HEK293 (cell line): ENCODE measurements at regions of chr17 and their contacts with region 1.

Region 1: GRCh38 chr17:62686439-62686838 is 59.0 kb downstream of the MRC2 start:
- H3K4me3 ChIP-seq: no peak overlapping the region
- H3K27ac ChIP-seq: no peak overlapping the region
- H3K4me1 ChIP-seq: no peaks in the 10 kb centered on the region
- CTCF ChIP-seq: no peak

Region 2: GRCh38 chr17:62644487-62645173 is 41.8 kb before region 1 on chr17:
- CTCF ChIA-PET with region 1: no interaction called
- POLR2A ChIA-PET with region 1: no interaction called
- H3K4me3 ChIP-seq: no peak overlapping the region
- H3K27ac ChIP-seq: no peak overlapping the region
- H3K4me1 ChIP-seq: no peaks in the 10 kb centered on the region
- CTCF ChIP-seq: no peak

Region 3: GRCh38 chr17:62671583-62672312 is 14.7 kb before region 1 on chr17:
- CTCF ChIA-PET with region 1: interaction called, 12 read pairs
- POLR2A ChIA-PET with region 1: no interaction called
- H3K4me3 ChIP-seq: no peak overlapping the region
- H3K27ac ChIP-seq: no peak overlapping the region
- H3K4me1 ChIP-seq: no peaks in the 10 kb centered on the region
- CTCF ChIP-seq: no peak